A549 (cell line): ENCODE measurements at regions of chr17 and their contacts with region 1.

Region 1: DNA sequence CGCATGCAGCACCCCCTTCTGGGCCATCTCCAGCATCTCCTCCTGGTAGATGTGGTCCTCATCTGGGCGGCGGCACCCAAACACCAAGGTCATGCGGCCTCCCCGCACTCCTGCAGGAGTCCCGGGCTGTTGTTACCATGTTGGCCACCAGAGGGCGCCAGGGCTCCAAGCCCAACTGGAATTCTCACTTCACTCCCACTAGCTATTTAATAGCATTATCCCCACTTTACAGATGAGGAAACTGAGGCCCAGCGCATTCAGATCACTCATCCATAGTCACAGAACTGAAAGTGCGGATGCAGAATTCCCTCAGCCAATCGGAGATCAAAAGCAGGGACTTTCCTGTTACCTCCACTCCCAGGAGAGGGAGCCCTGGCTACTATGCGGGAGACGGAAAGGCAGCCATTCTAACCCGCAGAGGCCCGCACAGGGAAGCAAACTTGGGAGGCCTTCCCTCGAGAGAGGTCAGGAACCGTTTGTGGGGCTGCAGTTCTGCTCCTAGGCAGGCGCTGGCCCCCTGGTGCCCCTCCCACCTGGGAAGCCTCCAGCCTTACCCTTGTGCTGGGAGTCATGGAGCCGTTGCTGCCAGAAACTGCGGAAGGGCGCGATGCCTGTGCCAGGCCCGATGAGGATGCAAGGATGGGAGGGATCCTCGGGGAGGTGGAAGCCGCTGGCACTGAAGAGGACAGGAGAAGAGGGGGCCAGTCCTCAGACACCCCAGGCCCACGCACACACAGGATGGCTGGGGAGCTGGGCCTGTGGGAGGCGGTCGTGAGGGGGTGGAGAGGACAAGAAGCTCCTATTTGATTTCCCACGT is 40.1 kb downstream of the NOS2 start:
- DNase-seq: peak; percentile 45 to 58
- ATAC-seq: peak; percentile 44 to 82; a peak in 5 of 6 replicates
- H3K4me3 ChIP-seq: no peak overlapping the region
- H3K27ac ChIP-seq: no peak overlapping the region
- H3K4me1 ChIP-seq: no peaks in the 10 kb centered on the region
- CTCF ChIP-seq: peak; percentile 97
- EP300 ChIP-seq: no peak
- POLR2A ChIP-seq: no peak
- RAD21 ChIP-seq: peak; percentile 75 to 80

Region 2: GRCh38 chr17:27578718-27579085 is 181.6 kb before region 1 on chr17:
- CTCF ChIA-PET with region 1: no interaction called
- POLR2A ChIA-PET with region 1: no interaction called
- DNase-seq: no peak
- ATAC-seq: peak; percentile 20 to 28; a peak in 3 of 6 replicates
- H3K4me3 ChIP-seq: no peak overlapping the region
- H3K27ac ChIP-seq: peak overlapping the region; percentile 64 to 87; a peak in 4 of 6 replicates
- H3K4me1 ChIP-seq: peaks cover 61% of the 10 kb centered on the region
- CTCF ChIP-seq: no peak
- EP300 ChIP-seq: no peak
- POLR2A ChIP-seq: no peak
- RAD21 ChIP-seq: no peak

Region 3: GRCh38 chr17:27666831-27667560 is 93.3 kb before region 1 on chr17:
- CTCF ChIA-PET with region 1: interaction called, 500 read pairs
- POLR2A ChIA-PET with region 1: no interaction called
- DNase-seq: no peak
- ATAC-seq: no peak
- H3K4me3 ChIP-seq: no peak overlapping the region
- H3K27ac ChIP-seq: no peak overlapping the region
- H3K4me1 ChIP-seq: no peaks in the 10 kb centered on the region
- CTCF ChIP-seq: no peak
- EP300 ChIP-seq: no peak
- POLR2A ChIP-seq: no peak
- RAD21 ChIP-seq: no peak

Region 4: DNA sequence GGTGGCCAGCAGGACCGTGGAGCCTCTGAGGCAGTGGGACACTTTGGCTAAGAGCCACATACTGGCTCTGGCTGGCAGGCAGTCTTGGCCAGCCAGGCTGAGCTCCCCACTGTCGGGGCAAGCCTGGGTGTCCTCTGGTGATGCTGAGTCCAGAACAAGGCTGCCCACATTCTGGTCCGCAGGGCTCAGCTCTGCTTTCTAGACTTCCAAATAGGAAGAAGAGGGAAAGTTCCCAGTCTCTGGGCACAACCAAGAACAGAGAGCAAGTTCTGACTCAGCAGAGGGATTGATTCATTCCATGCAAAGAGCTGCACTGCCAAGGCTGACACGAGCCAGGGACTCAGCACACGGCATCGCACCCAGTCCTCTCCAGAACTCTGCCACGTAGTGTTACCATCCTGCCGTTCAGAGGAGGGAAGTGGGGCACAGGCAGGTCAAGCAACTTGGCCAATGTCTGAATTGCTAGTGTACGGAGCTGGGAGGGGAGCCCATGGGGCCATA is 18.9 kb before region 1 on chr17:
- CTCF ChIA-PET with region 1: interaction called, 30 read pairs
- POLR2A ChIA-PET with region 1: no interaction called
- DNase-seq: no peak
- ATAC-seq: peak; percentile 19 to 62; a peak in 3 of 6 replicates
- H3K4me3 ChIP-seq: no peak overlapping the region
- H3K27ac ChIP-seq: no peak overlapping the region
- H3K4me1 ChIP-seq: no peaks in the 10 kb centered on the region
- CTCF ChIP-seq: no peak
- EP300 ChIP-seq: no peak
- POLR2A ChIP-seq: no peak
- RAD21 ChIP-seq: no peak

Region 5: GRCh38 chr17:27778193-27778592 is 17.9 kb after region 1 on chr17:
- CTCF ChIA-PET with region 1: interaction called, 117 read pairs
- POLR2A ChIA-PET with region 1: no interaction called
- DNase-seq: no peak
- ATAC-seq: no peak; a peak in 1 of 6 replicates
- H3K4me3 ChIP-seq: no peak overlapping the region
- H3K27ac ChIP-seq: peak overlapping the region; percentile 48 to 59
- H3K4me1 ChIP-seq: peaks cover 12% of the 10 kb centered on the region
- CTCF ChIP-seq: no peak
- EP300 ChIP-seq: no peak
- POLR2A ChIP-seq: no peak
- RAD21 ChIP-seq: no peak

Region 6: GRCh38 chr17:27846042-27846655 is 85.9 kb after region 1 on chr17:
- CTCF ChIA-PET with region 1: interaction called, 10 read pairs
- POLR2A ChIA-PET with region 1: no interaction called
- DNase-seq: no peak
- ATAC-seq: no peak
- H3K4me3 ChIP-seq: no peak overlapping the region
- H3K27ac ChIP-seq: no peak overlapping the region
- H3K4me1 ChIP-seq: no peaks in the 10 kb centered on the region
- CTCF ChIP-seq: no peak
- EP300 ChIP-seq: no peak
- POLR2A ChIP-seq: no peak
- RAD21 ChIP-seq: no peak

Region 7: GRCh38 chr17:27892866-27893769 is 132.8 kb after region 1 on chr17 and contains the start of gene LYRM9:
- CTCF ChIA-PET with region 1: interaction called, 427 read pairs
- POLR2A ChIA-PET with region 1: no interaction called
- DNase-seq: peak; percentile 78 to 90
- ATAC-seq: peak; percentile 95 to 99
- H3K4me3 ChIP-seq: peak within 1 kb of the TSS; percentile 48
- H3K27ac ChIP-seq: peak within 1 kb of the TSS; percentile 78 to 94
- H3K4me1 ChIP-seq: peaks cover 20% of the 10 kb centered on the region; the same call in 1 of the 3 replicates
- CTCF ChIP-seq: peak; percentile 99
- EP300 ChIP-seq: no peak
- POLR2A ChIP-seq: peak; percentile 89
- RAD21 ChIP-seq: peak; percentile 31 to 62; a peak in 3 of 5 replicates
- polyA plus RNA-seq, gene LYRM9: 2.5 and 2.7 TPM in 2 replicates